ENCODE measurements at regions of chr6 and their contacts with region 1.

Region 1: GRCh38 chr6:108655806-108656651 is 95.3 kb downstream of the FOXO3 start:
- DNase-seq: peak in 1 of 2 donors; percentile 38
- ATAC-seq: peak in 7 of 8 donors; percentile 29 to 57 (median 52)
- H3K4me3 ChIP-seq: peak overlapping the region in 4 of 10 donors; percentile 5 to 13 (median 9)
- H3K27ac ChIP-seq: peak overlapping the region; percentile 57 to 90 (median 84)
- H3K4me1 ChIP-seq: peaks cover 28 to 100% (median 83%) of the 10 kb centered on the region in 9 donors
- H3K27me3 ChIP-seq: no peaks in the 10 kb centered on the region
- CTCF ChIP-seq: no peak

Region 2: GRCh38 chr6:108565893-108566292 is 90.1 kb before region 1 on chr6:
- intact Hi-C with region 1: loop called in 8 of 10 experiments (anchors 2 to 10 kb)
- DNase-seq: peak in 1 of 2 donors; percentile 57
- ATAC-seq: peak in 7 of 8 donors; percentile 16 to 63 (median 47)
- H3K4me3 ChIP-seq: peak overlapping the region in 5 of 10 donors; percentile 13 to 93 (median 75)
- H3K27ac ChIP-seq: peak overlapping the region; percentile 14 to 100 (median 96)
- H3K4me1 ChIP-seq: peaks cover 12 to 85% (median 66%) of the 10 kb centered on the region in 9 donors
- H3K27me3 ChIP-seq: no peaks in the 10 kb centered on the region
- CTCF ChIP-seq: peak in 4 of 9 donors; percentile 22 to 48 (median 42)

Region 3: DNA sequence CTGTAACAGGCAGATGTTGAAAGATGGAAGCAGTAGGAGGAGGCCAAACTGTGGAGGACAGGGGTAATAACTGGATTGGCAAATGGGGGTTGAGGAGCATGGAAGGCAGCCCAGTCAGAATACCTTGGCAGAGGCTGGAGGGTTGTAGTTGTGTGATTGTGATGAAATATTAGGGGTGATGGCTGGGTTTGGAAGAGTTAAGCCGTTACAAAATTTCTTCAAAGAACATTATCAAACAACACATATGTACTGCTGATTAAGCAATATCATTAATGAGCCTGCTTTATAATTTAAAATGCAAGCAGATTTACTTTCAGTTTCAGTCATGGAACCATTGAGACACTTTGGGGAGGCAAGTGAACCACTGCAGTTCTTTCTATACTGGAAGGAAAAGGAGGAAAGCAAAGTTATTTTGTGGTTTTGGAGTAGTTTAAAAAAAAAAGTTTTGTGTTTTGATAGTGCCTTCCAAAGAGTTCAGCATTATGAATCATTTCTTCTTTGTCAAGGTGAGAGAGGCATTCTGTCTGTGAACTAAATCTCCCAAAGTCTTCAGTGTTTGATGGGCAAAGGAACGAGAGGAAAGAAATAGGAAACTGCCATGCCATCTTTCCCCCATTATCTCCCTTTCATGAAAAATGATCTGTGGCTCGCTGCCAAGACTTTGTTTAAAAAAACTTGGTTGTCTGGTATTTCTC is 74.6 kb before region 1 on chr6:
- intact Hi-C with region 1: loop called in 2 of 10 experiments (anchors 5 kb)
- DNase-seq: no peak
- ATAC-seq: peak in 4 of 8 donors; percentile 10 to 58 (median 34)
- H3K4me3 ChIP-seq: peak overlapping the region in 1 of 10 donors; percentile 11
- H3K27ac ChIP-seq: peak overlapping the region; percentile 9 to 65 (median 52)
- H3K4me1 ChIP-seq: peaks cover 38 to 98% (median 94%) of the 10 kb centered on the region in 9 donors
- H3K27me3 ChIP-seq: no peaks in the 10 kb centered on the region
- CTCF ChIP-seq: no peak

Region 4: GRCh38 chr6:108592371-108593337 is 63.4 kb before region 1 on chr6:
- intact Hi-C with region 1: loop called in 2 of 10 experiments (anchors 2 to 5 kb)
- DNase-seq: no peak
- ATAC-seq: peak; percentile 20 to 59 (median 33)
- H3K4me3 ChIP-seq: no peak overlapping the region
- H3K27ac ChIP-seq: peak overlapping the region in 9 of 10 donors; percentile 46 to 85 (median 76)
- H3K4me1 ChIP-seq: peaks cover 68 to 100% (median 100%) of the 10 kb centered on the region in 9 donors
- H3K27me3 ChIP-seq: no peaks in the 10 kb centered on the region
- CTCF ChIP-seq: no peak

Region 5: GRCh38 chr6:108782179-108783041 is 126.4 kb after region 1 on chr6:
- intact Hi-C with region 1: loop called in 1 of 10 experiments (anchors 5 kb)
- DNase-seq: peak; percentile 82
- ATAC-seq: peak; percentile 89 to 96 (median 93)
- H3K4me3 ChIP-seq: peak overlapping the region in 9 of 10 donors; percentile 31 to 64 (median 55)
- H3K27ac ChIP-seq: peak overlapping the region in 5 of 10 donors; percentile 5 to 42 (median 33)
- H3K4me1 ChIP-seq: peaks cover 0 to 21% (median 7%) of the 10 kb centered on the region in 9 donors
- H3K27me3 ChIP-seq: no peaks in the 10 kb centered on the region
- CTCF ChIP-seq: peak; percentile 41 to 93 (median 82)

Measured in heart right ventricle (tissue), 16 donors.